Panc1 (cell line): ENCODE measurements at regions of chr15 and their contacts with region 1.

Region 1: DNA sequence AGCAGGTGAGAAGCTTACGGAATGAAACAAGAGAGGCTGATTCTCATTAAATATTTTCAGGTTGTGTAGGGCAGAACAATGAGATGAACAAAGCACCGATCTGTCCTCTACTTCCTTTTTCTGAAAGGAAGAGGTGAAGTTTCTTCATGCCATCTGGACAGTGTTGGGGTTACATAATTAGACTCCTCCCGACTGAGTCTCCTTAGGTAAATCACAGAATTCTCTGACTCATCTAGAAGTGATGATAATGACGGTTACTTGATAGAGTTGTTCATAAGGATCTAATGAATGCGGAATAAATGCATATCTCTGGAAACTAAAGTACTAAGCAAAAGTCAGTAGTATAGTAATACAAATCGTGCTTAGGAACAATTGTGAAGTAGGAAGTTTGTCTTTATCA is 21.2 kb downstream of the CRTC3 start:
- DNase-seq: no peak
- ATAC-seq: no peak
- H3K4me3 ChIP-seq: no peak overlapping the region
- H3K27ac ChIP-seq: no peak overlapping the region
- H3K4me1 ChIP-seq: no peaks in the 10 kb centered on the region
- H3K27me3 ChIP-seq: no peaks in the 10 kb centered on the region
- CTCF ChIP-seq: no peak

Region 2: DNA sequence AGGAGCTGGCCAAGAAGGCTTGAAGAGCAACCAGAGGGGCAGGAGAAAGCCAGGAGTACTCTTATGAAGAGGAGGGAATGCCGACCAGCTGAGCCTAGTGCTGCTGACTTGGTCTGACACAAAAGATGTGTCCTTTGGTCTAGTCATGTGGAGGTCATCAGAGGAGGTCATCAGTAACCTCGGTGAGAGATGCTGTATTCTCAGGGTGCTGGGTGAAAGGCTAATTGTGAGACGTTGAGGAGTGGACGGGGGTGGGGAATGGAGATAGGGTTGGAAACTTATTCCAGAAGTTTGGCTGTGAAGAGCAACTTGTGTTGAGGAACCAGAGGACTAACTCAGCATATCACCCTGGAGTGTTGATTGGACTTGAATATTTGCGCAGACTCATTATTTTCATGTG is 15.7 kb before region 1 on chr15:
- CTCF ChIA-PET with region 1: no interaction called
- POLR2A ChIA-PET with region 1: interaction called, 10 read pairs
- in situ Hi-C with region 1: no loop called
- intact Hi-C with region 1: no loop called
- DNase-seq: no peak
- ATAC-seq: no peak
- H3K4me3 ChIP-seq: no peak overlapping the region
- H3K27ac ChIP-seq: no peak overlapping the region
- H3K4me1 ChIP-seq: peaks cover 14% of the 10 kb centered on the region
- H3K27me3 ChIP-seq: no peaks in the 10 kb centered on the region
- CTCF ChIP-seq: no peak